Vagina (tissue), 2 donors: ENCODE measurements at regions of chr7 and their contacts with region 1.

Region 1: GRCh38 chr7:129210256-129210988 is 14.4 kb upstream of the AHCYL2 start:
- DNase-seq: no peak
- H3K4me3 ChIP-seq: no peak overlapping the region
- H3K27ac ChIP-seq: no peak overlapping the region
- H3K4me1 ChIP-seq: no peaks in the 10 kb centered on the region
- H3K27me3 ChIP-seq: no peaks in the 10 kb centered on the region
- CTCF ChIP-seq: peak; percentile 77 to 80 (median 78)
- POLR2A ChIP-seq: no peak

Region 2: DNA sequence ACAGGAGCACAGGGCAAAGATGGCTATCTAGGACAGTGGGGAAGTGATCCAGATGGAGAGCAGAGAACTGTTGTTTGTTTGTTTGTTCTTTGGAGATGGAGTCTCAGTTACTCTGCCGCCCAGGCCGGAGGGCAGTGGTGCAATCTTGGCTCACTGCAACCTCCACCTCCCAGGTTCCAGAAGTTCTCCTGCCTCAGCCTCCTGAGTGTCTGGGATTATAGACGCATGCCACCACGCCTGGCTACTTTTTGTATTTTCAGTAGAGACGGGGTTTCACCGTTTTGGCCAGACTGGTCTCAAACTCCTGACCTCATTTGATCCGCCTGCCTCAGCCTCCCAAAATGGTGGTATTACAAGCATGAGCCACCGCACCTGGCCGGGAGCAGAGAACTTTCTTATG is 713.0 kb before region 1 on chr7:
- intact Hi-C with region 1: loop called (anchors 5 kb)
- DNase-seq: no peak
- H3K4me3 ChIP-seq: no peak overlapping the region
- H3K27ac ChIP-seq: no peak overlapping the region
- H3K4me1 ChIP-seq: no peaks in the 10 kb centered on the region
- H3K27me3 ChIP-seq: no peaks in the 10 kb centered on the region
- CTCF ChIP-seq: no peak
- POLR2A ChIP-seq: no peak

Region 3: DNA sequence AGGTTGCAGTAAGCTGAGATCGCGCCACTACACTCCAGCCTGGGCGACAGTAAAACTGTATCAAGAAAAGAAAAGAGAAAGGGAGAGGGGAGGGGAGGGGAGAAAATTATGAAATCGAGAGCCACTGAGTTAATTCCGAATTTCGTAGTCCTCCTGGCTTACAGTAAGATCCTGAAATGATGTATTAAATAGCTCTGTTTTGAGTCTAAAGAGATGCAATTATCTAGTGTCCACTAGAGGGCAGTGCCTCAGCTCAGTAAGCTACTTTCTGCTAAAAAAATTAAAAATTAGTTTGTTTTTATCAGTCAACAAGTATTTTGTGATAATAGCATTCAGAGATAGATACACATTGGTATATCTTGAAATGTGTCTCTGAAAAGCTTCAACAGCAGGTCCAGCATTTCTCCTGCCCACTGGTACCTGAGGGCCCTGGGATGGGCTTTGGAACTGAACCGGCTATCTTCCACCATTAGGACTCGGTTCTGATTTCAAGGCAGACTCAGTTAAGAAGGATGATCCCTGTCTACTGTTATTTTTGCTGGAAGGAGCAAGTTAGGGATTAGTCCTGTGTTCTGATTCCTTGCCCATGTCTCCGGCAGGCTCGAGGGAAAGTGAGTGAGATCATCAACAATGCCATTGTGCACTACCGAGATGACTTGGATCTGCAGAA is 46.4 kb before region 1 on chr7:
- intact Hi-C with region 1: loop called (anchors 5 kb)
- DNase-seq: no peak
- H3K4me3 ChIP-seq: no peak overlapping the region
- H3K27ac ChIP-seq: no peak overlapping the region
- H3K4me1 ChIP-seq: peaks cover 12% of the 10 kb centered on the region
- H3K27me3 ChIP-seq: no peaks in the 10 kb centered on the region
- CTCF ChIP-seq: peak; percentile 30 to 77 (median 45)
- POLR2A ChIP-seq: no peak

Region 4: DNA sequence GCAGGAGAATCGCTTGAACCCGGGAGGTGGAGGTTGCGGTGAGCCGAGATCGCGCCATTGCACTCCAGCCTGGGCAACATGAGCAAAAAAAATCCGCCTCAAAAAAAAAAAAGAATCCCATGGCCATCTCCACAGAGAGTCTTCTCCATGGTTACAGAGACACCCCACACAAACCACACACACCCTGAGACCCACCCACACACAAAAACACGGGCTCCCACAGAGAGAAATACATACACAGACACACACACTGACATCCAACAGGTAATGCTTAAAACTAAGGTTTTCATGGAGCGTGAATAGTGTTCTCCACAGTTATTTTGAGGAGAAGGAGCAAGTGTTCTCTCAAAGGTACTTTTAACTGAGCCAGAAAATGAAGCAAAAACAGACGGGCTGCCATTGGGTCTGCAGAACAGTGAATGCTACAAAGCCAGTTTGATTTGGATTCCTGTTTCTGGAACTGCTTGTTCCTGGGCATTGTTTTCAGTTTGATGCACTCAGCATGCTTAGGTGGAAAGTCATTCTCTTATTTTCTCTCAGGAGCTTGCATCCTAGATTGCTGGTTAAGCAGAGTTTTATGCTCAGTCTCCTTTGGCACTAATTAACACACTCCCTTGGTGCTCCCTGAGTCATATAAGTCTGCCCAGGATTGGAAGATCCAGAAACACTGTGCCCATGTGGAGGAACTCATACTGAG is 29.8 kb after region 1 on chr7:
- intact Hi-C with region 1: no loop called
- DNase-seq: no peak
- H3K4me3 ChIP-seq: no peak overlapping the region
- H3K27ac ChIP-seq: no peak overlapping the region
- H3K4me1 ChIP-seq: no peaks in the 10 kb centered on the region
- H3K27me3 ChIP-seq: no peaks in the 10 kb centered on the region
- CTCF ChIP-seq: no peak
- POLR2A ChIP-seq: no peak